IMR-90 (cell line): ENCODE measurements at regions of chr7 and their contacts with region 1.

Region 1: GRCh38 chr7:34165929-34166550 is 260.7 kb downstream of the BMPER start:
- DNase-seq: peak; percentile 60
- ATAC-seq: peak; percentile 82
- H3K4me3 ChIP-seq: no peak overlapping the region
- H3K27ac ChIP-seq: no peak overlapping the region
- H3K4me1 ChIP-seq: peaks cover 2% of the 10 kb centered on the region; the same call in 1 of the 2 replicates
- H3K27me3 ChIP-seq: no peaks in the 10 kb centered on the region
- CTCF ChIP-seq: peak; percentile 76
- POLR2A ChIP-seq: no peak
- RAD21 ChIP-seq: peak; percentile 74

Region 2: GRCh38 chr7:33423646-33424020 is 742.4 kb before region 1 on chr7:
- CTCF ChIA-PET with region 1: no interaction called
- POLR2A ChIA-PET with region 1: no interaction called
- dilution Hi-C with region 1: no loop called
- in situ Hi-C with region 1: no loop called
- intact Hi-C with region 1: loop called (anchors 5 kb)
- DNase-seq: no peak
- ATAC-seq: no peak
- H3K4me3 ChIP-seq: no peak overlapping the region
- H3K27ac ChIP-seq: no peak overlapping the region
- H3K4me1 ChIP-seq: peaks cover 7% of the 10 kb centered on the region; the same call in 1 of the 2 replicates
- H3K27me3 ChIP-seq: peaks cover 13% of the 10 kb centered on the region
- CTCF ChIP-seq: peak; percentile 26; the same call in 1 of the 2 replicates
- POLR2A ChIP-seq: no peak
- RAD21 ChIP-seq: peak; percentile 36

Region 3: DNA sequence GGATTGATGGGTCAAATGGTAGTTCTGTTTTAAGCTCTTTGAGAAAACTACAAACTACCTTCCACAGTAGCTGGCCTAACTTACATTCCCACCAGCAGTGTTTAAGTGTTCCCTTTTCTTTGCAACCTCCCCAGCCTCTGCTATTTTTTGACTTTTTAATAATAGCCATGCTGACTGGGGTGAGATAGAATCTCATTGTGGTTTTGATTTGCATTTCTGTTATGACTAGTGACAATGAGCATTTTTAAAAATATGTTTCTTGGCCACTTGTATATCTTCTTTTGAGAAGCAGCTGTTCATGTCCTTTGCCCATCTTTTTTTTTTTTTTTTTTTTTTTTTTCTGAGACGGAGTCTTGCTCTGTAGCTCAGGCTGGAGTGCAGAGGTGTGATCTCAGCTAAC is 415.9 kb before region 1 on chr7:
- CTCF ChIA-PET with region 1: no interaction called
- POLR2A ChIA-PET with region 1: no interaction called
- dilution Hi-C with region 1: no loop called
- in situ Hi-C with region 1: no loop called
- intact Hi-C with region 1: loop called (anchors 5 kb)
- DNase-seq: peak; percentile 84
- ATAC-seq: peak; percentile 80
- H3K4me3 ChIP-seq: no peak overlapping the region
- H3K27ac ChIP-seq: no peak overlapping the region
- H3K4me1 ChIP-seq: peaks cover 8% of the 10 kb centered on the region
- H3K27me3 ChIP-seq: no peaks in the 10 kb centered on the region
- CTCF ChIP-seq: no peak
- POLR2A ChIP-seq: no peak
- RAD21 ChIP-seq: no peak

Region 4: DNA sequence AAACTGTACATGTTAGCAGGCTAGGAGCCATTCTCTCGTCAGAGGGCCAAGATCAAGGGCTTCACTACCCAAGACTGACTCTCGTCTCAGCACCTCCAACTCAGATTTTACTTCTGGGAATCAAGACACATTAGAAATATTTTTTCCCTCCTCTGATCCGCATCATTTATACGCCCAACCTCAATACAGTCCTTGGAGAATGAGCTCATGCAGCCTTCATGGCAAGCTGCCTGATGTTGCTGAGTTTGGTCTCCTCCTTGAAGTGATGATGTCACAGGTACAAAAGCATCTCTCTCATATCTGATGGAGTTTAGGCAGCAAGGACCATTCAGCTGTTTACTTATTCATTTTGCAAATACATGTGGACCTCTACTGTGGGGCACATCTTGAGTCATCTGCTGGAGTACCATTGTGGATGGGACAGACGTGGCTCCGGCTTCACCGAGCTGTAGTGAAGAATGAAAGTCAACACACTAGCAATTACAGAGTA is 146.7 kb before region 1 on chr7:
- CTCF ChIA-PET with region 1: no interaction called
- POLR2A ChIA-PET with region 1: no interaction called
- dilution Hi-C with region 1: no loop called
- in situ Hi-C with region 1: no loop called
- intact Hi-C with region 1: no loop called
- DNase-seq: peak; percentile 51
- ATAC-seq: no peak
- H3K4me3 ChIP-seq: no peak overlapping the region
- H3K27ac ChIP-seq: no peak overlapping the region
- H3K4me1 ChIP-seq: peaks cover 6% of the 10 kb centered on the region
- H3K27me3 ChIP-seq: no peaks in the 10 kb centered on the region
- CTCF ChIP-seq: no peak
- POLR2A ChIP-seq: no peak
- RAD21 ChIP-seq: no peak

Region 5: GRCh38 chr7:34247468-34247867 is 81.4 kb after region 1 on chr7:
- CTCF ChIA-PET with region 1: no interaction called
- POLR2A ChIA-PET with region 1: no interaction called
- dilution Hi-C with region 1: no loop called
- in situ Hi-C with region 1: no loop called
- intact Hi-C with region 1: no loop called
- DNase-seq: peak; percentile 33
- ATAC-seq: peak; percentile 46; the same call in 1 of the 2 replicates
- H3K4me3 ChIP-seq: no peak overlapping the region
- H3K27ac ChIP-seq: no peak overlapping the region
- H3K4me1 ChIP-seq: no peaks in the 10 kb centered on the region
- H3K27me3 ChIP-seq: no peaks in the 10 kb centered on the region
- CTCF ChIP-seq: no peak
- POLR2A ChIP-seq: no peak
- RAD21 ChIP-seq: no peak

Region 6: GRCh38 chr7:34939175-34939574 is 773.1 kb after region 1 on chr7:
- CTCF ChIA-PET with region 1: no interaction called
- POLR2A ChIA-PET with region 1: no interaction called
- dilution Hi-C with region 1: no loop called
- in situ Hi-C with region 1: no loop called
- intact Hi-C with region 1: no loop called
- DNase-seq: peak; percentile 94
- ATAC-seq: peak; percentile 94
- H3K4me3 ChIP-seq: no peak overlapping the region
- H3K27ac ChIP-seq: no peak overlapping the region
- H3K4me1 ChIP-seq: peaks cover 1% of the 10 kb centered on the region; the same call in 1 of the 2 replicates
- H3K27me3 ChIP-seq: no peaks in the 10 kb centered on the region
- CTCF ChIP-seq: no peak
- POLR2A ChIP-seq: no peak
- RAD21 ChIP-seq: no peak